AG04449 (cell line): ENCODE measurements at regions of chr11 and their contacts with region 1.

Region 1: GRCh38 chr11:119262668-119263351 is 54.1 kb downstream of the MCAM start:
- DNase-seq: no peak
- H3K4me3 ChIP-seq: no peak overlapping the region
- CTCF ChIP-seq: no peak

Region 2: DNA sequence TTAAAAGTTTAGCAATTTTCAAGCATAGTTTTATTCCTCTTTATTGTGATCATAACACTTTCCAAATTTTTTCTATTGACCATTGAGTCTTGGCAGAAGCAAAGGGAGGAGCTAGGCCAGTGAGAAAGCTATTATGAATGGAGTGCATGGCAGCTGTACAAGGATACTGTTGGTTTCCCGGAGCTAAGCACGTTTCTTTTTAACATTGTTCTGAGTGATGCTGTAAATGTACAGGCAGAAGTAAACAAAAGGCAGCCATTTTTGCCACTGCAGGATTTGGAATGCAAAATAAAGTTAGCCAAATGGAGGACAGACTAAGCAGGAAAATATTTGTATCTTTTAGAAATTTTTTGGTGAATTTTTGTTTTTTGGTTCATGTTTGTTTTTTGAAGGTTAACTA is 40.5 kb before region 1 on chr11:
- CTCF ChIA-PET with region 1: no interaction called
- POLR2A ChIA-PET with region 1: no interaction called
- DNase-seq: no peak
- H3K4me3 ChIP-seq: no peak overlapping the region
- CTCF ChIP-seq: no peak

Region 3: DNA sequence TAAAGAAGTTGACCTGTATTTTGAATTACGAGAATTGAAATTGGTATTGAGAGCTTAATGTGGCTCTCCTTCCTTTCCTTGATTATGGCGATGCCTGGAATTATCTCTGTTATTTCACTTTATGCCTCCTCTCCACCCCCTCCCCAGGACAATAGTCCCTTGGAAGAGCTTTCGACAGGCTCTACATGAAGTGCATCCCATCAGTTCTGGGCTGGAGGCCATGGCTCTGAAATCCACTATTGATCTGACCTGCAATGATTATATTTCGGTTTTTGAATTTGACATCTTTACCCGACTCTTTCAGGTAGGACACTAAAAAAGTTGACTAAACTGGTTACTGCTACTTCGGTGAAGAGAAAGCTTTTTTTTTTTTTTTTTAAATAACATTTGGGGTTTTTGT is 10.9 kb after region 1 on chr11:
- CTCF ChIA-PET with region 1: interaction called, 12 read pairs
- POLR2A ChIA-PET with region 1: no interaction called
- DNase-seq: no peak
- H3K4me3 ChIP-seq: no peak overlapping the region
- CTCF ChIP-seq: no peak